ENCODE measurements at regions of chr1 and their contacts with region 1.

Region 1: DNA sequence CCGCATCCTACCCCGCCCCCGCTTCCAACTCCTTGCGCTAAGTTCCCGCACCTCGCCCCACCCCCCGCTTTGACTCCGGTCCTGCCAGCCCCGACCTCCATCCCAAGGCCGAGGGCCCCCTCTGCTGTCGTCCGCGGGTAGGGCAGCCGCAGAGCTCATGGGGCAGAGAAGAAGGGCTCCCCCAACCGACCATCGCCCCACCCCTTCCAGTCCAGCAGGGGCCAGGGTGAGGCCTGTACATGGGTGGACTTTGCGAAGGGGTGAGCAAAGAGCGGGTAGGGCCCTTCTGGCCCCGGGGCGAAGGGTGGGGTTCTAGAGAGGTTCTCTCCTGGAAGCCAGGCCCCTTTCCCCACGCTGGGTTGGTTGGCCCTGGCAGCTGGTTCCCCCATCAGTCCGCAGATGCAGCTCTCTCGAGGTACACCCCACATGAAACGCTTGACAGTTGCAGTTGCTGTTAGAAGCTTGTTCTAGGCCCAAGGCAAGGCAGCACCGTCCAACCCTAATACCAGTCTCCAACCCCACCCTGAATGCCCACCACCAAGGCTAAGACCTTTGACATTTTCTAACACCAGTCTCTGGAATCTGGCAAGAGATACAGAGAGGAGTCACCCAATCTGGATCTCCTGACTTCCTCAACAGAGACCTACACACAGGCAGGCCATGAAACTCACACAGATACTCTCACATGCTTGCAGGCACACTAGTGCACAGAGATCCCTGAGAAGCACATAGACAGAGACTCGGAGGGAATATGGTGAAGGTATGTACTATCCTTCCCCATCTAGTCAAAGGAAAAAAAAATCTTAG is 25.3 kb upstream of the ADGRB2 start:
- DNase-seq: peak; percentile 96
- H3K4me3 Mint-ChIP-seq: peak overlapping the region; percentile 80
- H3K27ac Mint-ChIP-seq: no peak overlapping the region
- H3K4me1 Mint-ChIP-seq: peaks cover 13% of the 10 kb centered on the region
- H3K27me3 Mint-ChIP-seq: no peaks in the 10 kb centered on the region

Region 2: DNA sequence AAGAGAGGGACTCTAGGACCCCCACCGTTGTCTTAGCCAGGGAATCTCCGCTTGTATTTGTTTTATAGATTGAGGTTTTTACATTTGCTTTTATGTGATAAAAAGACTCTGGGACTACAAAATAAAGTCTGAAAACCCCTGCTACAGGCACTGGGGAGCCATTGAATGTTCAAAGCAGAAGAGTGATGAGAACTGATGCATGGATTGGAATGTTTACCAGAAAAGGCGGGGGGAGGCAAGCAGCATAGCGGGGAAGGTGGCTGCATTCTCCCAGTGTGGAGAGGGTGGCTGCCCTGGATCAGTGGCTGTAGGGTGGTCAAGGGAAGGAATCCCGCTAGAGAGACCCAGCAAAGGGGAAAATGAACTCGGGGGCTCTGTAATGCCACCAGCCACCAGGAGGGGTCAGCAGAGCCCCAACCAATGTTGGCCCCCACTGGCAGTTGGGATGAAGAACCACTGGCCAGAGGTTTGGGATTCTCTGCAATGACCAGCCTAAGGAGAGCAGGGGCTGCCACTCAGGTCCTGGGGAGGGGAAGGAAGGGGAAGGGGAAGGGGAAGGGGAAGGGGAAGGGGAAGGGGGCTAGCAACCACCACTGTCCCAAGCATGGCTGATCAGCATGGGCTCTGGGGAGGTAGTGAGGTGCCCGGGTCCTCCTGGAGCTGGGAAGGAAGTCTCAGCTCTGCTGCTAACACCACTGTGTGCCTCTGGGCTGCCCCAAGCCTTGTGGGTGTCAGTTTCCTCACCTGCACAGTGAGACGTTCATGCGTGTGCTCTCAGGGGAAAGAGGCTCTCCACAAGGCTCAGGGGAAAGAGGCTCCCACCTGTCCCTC is 125.6 kb before region 1 on chr1:
- CTCF ChIA-PET with region 1: interaction called, 22 read pairs
- POLR2A ChIA-PET with region 1: no interaction called
- DNase-seq: peak; percentile 57
- H3K4me3 Mint-ChIP-seq: no peak overlapping the region
- H3K27ac Mint-ChIP-seq: no peak overlapping the region
- H3K4me1 Mint-ChIP-seq: no peaks in the 10 kb centered on the region
- H3K27me3 Mint-ChIP-seq: no peaks in the 10 kb centered on the region

Region 3: DNA sequence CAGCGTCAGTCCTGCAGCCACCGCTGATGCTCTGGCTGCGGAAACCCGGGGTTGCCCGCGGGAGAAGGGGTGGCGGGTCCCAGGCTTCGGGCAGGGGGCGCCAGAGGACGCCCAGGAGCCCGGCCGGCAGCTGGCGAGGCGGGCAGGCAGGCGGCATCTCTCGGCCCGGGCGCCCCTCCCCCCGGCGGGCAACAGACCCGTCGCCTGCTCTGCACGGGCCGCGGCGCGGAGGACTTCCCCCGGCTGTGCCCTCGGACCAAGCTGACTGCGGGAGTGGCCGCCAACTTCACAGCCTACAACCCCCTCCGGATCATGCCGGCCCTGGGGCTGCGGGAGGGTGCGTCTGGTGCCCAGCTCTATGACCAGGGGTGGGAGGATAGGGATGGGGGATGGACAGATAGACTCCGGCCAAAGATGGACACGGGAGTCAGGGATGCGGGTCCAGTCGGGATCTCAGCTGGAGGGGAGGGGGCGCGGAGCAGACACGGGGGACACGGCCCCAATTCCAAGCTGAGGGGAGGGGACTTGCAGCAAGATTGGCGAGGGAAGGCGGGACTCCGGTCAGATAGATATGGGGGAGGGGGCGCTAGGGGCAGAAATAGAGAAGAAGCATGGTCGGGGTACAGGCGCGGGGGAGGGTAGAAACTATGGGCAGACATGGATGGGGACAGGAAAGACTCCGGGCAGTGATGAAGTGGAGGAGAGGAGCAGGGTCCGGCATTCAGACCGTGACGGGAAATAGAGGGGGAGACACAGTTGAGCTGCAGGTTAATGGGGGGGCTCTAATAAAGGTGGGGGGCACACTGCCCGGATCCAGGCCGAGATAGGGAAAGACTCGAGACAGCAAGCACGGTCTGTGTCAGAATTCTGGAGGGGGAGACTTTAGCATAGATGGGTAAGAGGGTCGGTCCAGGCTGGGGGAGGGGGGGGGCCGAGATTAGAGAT is 26.5 kb before region 1 on chr1:
- CTCF ChIA-PET with region 1: interaction called, 44 read pairs
- POLR2A ChIA-PET with region 1: no interaction called
- DNase-seq: peak; percentile 66
- H3K4me3 Mint-ChIP-seq: peak overlapping the region; percentile 65
- H3K27ac Mint-ChIP-seq: no peak overlapping the region
- H3K4me1 Mint-ChIP-seq: peaks cover 31% of the 10 kb centered on the region
- H3K27me3 Mint-ChIP-seq: peaks cover 64% of the 10 kb centered on the region

Region 4: DNA sequence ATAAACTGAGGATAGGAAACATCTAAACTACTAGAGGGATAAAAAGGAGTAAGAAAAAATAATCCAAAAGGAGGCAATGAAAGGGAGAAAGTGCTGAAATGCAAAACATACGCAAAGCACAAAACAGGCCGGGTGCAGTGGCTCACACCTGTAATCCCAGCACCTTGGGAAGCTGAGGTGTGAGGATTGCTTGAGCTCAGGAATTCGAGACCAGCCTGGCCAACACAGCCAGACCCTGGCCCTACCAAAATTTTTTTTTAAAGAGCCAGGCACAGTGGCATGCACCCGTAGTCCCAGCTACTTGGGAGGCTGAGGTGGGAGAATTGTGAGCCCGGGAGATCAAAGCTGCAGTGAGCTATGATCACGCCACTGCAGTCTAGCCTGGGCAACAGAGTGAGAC is 15.9 kb after region 1 on chr1:
- CTCF ChIA-PET with region 1: interaction called, 16 read pairs
- POLR2A ChIA-PET with region 1: no interaction called
- DNase-seq: no peak
- H3K4me3 Mint-ChIP-seq: no peak overlapping the region
- H3K27ac Mint-ChIP-seq: no peak overlapping the region
- H3K4me1 Mint-ChIP-seq: peaks cover 9% of the 10 kb centered on the region
- H3K27me3 Mint-ChIP-seq: peaks cover 32% of the 10 kb centered on the region